ENCODE measurements at regions of chr12 and their contacts with region 1.

Region 1: GRCh38 chr12:10562306-10562933 is 51.0 kb downstream of the MAGOHB start:
- DNase-seq: peak in 7 of 10 donors; percentile 29 to 74 (median 49)
- ATAC-seq: no peak
- H3K4me3 Mint-ChIP-seq: peak overlapping the region in 8 of 10 donors; percentile 5 to 94 (median 50)
- H3K27ac Mint-ChIP-seq: peak overlapping the region; percentile 79 to 97 (median 93)
- H3K4me1 Mint-ChIP-seq: peaks cover 33 to 85% (median 77%) of the 10 kb centered on the region in 4 donors
- H3K27me3 Mint-ChIP-seq: no peaks in the 10 kb centered on the region

Region 2: DNA sequence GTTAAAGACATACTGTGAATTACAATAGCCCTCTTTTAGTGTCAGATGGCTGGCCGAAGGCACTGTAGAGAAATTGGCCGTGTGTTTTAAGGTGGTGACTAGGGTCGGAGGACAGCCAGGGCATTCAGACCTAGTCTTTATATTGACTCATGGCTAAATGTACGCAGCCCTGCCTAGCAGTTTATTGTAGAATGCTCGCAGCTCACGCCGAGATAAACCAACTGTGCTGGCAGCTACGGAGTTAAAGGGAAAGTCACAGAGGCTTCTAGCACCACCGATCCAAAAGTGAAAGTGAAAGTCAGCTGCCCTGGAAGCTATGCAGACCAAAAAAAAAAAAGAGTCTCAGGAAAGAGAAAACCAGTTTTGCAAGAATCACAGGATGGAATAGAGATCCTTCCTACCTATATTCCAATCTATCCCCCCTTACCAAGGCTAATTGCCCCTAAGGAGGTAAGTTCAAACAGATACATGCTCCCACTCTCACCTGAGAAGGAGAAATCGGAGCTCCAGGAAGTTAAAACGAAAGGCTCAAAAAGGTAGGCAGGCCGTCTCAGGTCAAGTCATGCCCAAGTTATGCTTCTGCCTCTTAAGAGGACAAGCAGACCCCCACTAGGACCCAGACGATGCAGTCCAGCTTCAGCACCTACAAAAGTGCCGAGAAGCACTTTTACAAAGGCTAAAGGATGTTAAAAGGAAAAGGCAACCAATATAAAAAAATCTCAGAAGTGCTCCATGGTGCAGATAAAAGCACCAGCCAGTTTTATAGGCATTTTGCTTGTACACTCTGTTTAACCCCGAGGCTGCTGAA is 197.4 kb before region 1 on chr12:
- POLR2A ChIA-PET with region 1: interaction called, 56 read pairs
- DNase-seq: peak; percentile 29 to 87 (median 72)
- ATAC-seq: peak; percentile 57 to 67
- H3K4me3 Mint-ChIP-seq: no peak overlapping the region
- H3K27ac Mint-ChIP-seq: no peak overlapping the region
- H3K4me1 Mint-ChIP-seq: peaks cover 7 to 41% (median 34%) of the 10 kb centered on the region in 4 donors
- H3K27me3 Mint-ChIP-seq: no peaks in the 10 kb centered on the region

Region 3: DNA sequence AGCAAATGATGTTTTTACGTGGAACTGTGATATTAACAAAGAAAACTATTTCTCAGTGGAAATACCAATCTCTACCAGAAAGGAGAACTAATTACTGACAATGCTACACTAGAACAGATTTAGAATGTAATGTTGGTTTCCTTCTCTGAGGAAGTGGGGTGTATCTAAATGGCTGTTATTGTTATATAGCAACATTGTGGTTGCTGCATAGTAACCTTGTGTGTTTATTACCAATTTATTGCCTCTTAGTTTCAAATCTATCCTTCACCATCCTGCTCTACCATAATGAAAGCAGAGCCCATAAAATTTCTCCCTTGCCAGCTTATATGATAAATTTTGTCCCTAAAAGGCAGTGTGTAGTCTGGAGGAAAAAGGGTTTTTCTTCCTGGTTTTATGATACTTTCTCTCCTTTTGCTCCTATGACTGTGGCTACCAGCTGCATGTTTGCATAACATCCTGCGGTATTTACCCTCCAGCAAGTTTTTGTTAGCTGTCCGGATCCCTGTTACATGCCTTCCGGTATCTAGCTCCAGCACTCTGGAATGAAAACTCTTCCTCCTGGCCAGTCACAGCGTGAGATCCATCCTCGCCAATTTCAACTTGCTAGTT is 166.9 kb before region 1 on chr12:
- POLR2A ChIA-PET with region 1: interaction called, 19 read pairs
- DNase-seq: peak in 6 of 10 donors; percentile 43 to 87 (median 69)
- ATAC-seq: peak; percentile 71 to 80
- H3K4me3 Mint-ChIP-seq: peak overlapping the region; percentile 63 to 91 (median 83)
- H3K27ac Mint-ChIP-seq: peak overlapping the region; percentile 97 to 100 (median 99)
- H3K4me1 Mint-ChIP-seq: peaks cover 35 to 78% (median 70%) of the 10 kb centered on the region in 4 donors
- H3K27me3 Mint-ChIP-seq: no peaks in the 10 kb centered on the region

Region 4: DNA sequence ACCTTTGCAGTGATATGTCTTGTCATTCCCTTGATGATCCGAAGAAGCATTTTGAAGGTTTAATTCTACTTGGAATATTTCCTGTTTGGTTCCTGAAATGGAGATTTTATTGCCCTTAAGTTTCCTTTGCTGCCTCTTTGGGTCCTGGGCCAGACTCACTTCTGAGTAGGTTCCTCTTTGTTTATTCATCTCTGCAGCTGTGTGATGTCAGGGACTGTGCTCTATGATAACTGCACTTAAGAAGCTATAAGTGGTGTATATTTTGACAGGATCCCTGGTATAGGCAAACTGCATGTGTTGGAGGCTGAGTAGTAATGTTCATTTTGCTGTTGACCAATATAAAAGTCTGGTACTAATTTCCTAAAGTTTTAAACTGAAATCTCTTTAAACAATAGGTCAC is 153.0 kb before region 1 on chr12 and contains the start of gene KLRC4:
- POLR2A ChIA-PET with region 1: interaction called, 13 read pairs
- DNase-seq: peak in 6 of 10 donors; percentile 7 to 68 (median 52)
- ATAC-seq: peak; percentile 81 to 89
- H3K4me3 Mint-ChIP-seq: peak within 1 kb of the TSS; percentile 86 to 97 (median 90)
- H3K27ac Mint-ChIP-seq: peak within 1 kb of the TSS; percentile 38 to 98 (median 92)
- H3K4me1 Mint-ChIP-seq: peaks cover 9 to 36% (median 25%) of the 10 kb centered on the region in 4 donors
- H3K27me3 Mint-ChIP-seq: no peaks in the 10 kb centered on the region
- polyA plus RNA-seq, gene KLRC4: 1.3 to 31.8 (median 13.6) TPM

Region 5: DNA sequence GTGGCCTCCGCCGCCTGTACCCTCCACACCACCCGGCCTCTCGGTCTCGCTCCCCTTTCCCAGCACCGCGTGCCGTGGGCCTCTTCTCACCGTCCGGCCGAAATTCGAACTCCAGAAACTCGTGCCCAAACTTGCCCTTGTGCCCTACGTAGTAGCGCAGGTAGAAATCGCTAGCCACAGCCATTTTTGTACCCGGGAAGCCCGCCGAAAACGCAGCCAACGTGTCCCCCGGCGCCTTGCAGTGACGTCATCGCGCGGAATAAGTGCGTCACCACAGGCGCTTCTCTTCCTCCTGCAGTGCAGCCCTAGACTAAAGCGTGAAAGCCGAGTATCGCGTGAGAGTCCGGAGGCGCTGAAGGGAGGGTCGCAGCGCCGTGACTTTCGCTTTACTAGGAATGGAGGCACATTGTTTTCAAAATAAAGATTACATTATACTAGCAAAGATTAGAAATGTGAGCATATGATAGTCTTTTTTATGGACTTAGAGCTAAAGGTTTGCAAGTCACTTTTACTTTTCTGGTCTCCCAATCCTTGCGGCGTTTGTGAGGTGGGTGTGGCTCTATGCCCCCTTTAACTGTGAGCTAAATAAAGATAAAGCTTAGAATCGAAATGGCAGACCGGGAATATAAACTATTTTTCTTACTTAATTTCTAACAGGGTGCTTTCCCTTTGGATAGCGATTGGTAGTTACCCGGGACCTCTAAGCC is 51.1 kb after region 1 on chr12 and contains the start of gene MAGOHB:
- POLR2A ChIA-PET with region 1: interaction called, 10 read pairs
- DNase-seq: peak; percentile 95 to 100 (median 98)
- ATAC-seq: peak; percentile 93 to 95
- H3K4me3 Mint-ChIP-seq: peak within 1 kb of the TSS; percentile 98 to 100 (median 99)
- H3K27ac Mint-ChIP-seq: peak within 1 kb of the TSS; percentile 99 to 100 (median 100)
- H3K4me1 Mint-ChIP-seq: peaks cover 18 to 37% (median 29%) of the 10 kb centered on the region in 4 donors
- H3K27me3 Mint-ChIP-seq: peaks cover 0 to 7% (median 2%) of the 10 kb centered on the region in 5 donors
- polyA plus RNA-seq, gene MAGOHB: 44.1 to 77.3 (median 53.9) TPM

Measured in naive thymus-derived CD8-positive, alpha-beta T cell (primary cell).